ENCODE measurements at regions of chr4 and their contacts with region 1.

Region 1: GRCh38 chr4:117134386-117134785 is 49.0 kb upstream of the TRAM1L1 start:
- DNase-seq: peak; percentile 67
- ATAC-seq: peak; percentile 81
- H3K4me3 ChIP-seq: 0 out of 4 replicates have a peak overlapping the region, but pooled peaks of 1 of the 2 experiments have one; percentile 4
- H3K27ac ChIP-seq: no peak overlapping the region
- H3K4me1 ChIP-seq: peaks cover 0 to 25% of the 10 kb centered on the region in 2 experiments; a peak in 2 of 4 replicates
- H3K27me3 ChIP-seq: no peaks in the 10 kb centered on the region
- CTCF ChIP-seq: peak; percentile 60 to 76 (median 73)
- POLR2A ChIP-seq: no peak
- RAD21 ChIP-seq: peak; percentile 91

Region 2: DNA sequence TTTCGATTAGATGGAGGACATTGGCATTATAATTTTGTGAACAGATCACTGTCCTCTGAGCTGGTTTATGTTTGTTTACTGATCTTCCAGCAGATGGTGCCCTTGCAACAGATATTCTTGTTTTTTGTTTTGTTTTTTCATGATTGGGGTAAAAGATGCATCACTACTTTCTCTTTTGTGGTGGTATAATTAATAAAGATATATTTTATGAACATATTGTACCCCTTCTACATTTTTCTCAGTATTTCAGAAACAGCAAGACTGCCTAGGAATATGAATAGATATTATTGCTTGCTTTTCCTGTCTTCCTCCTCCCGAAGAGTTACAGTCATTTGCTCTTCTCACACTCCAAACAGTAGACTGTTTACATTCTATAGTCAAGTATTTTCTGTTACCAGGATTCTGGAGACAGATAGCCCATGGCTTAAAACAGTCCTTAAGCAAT is 954.2 kb before region 1 on chr4:
- CTCF ChIA-PET with region 1: no interaction called
- POLR2A ChIA-PET with region 1: no interaction called
- RAD21 ChIA-PET with region 1: no interaction called
- intact Hi-C with region 1: loop called (anchors 5 kb)
- DNase-seq: peak; percentile 10
- ATAC-seq: peak; percentile 59; the same call in 1 of the 2 replicates
- H3K4me3 ChIP-seq: no peak overlapping the region
- H3K27ac ChIP-seq: no peak overlapping the region
- H3K4me1 ChIP-seq: no peaks in the 10 kb centered on the region
- H3K27me3 ChIP-seq: no peaks in the 10 kb centered on the region
- CTCF ChIP-seq: peak; percentile 42 to 64 (median 46); a peak in 4 of 6 replicates
- POLR2A ChIP-seq: no peak
- RAD21 ChIP-seq: peak; percentile 76

Region 3: DNA sequence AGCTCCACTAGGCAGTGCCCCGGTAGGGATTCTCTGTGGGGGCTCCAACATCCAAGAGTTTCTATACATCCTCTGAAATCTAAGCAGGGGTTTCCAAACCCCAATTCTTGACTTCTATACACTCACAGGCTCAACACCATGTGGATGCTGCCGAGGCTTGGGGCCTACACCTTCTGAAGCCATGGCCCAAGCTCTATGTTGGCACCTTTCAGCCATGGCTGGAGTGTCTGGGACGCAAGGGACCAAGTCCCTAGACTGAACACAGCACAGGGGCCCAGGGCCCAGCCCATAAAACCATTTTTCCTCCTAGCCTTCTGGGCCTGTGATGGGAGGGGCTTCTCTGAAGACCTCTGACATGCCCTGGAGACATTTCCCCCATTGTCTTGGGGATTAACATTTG is 560.8 kb before region 1 on chr4:
- CTCF ChIA-PET with region 1: no interaction called
- POLR2A ChIA-PET with region 1: no interaction called
- RAD21 ChIA-PET with region 1: no interaction called
- intact Hi-C with region 1: no loop called
- DNase-seq: no peak
- ATAC-seq: no peak
- H3K4me3 ChIP-seq: no peak overlapping the region
- H3K27ac ChIP-seq: no peak overlapping the region
- H3K4me1 ChIP-seq: no peaks in the 10 kb centered on the region
- H3K27me3 ChIP-seq: no peaks in the 10 kb centered on the region
- CTCF ChIP-seq: no peak
- POLR2A ChIP-seq: no peak
- RAD21 ChIP-seq: no peak

Region 4: GRCh38 chr4:116934230-116934629 is 200.2 kb before region 1 on chr4:
- CTCF ChIA-PET with region 1: no interaction called
- POLR2A ChIA-PET with region 1: no interaction called
- RAD21 ChIA-PET with region 1: no interaction called
- intact Hi-C with region 1: no loop called
- DNase-seq: no peak
- ATAC-seq: no peak
- H3K4me3 ChIP-seq: no peak overlapping the region
- H3K27ac ChIP-seq: no peak overlapping the region
- H3K4me1 ChIP-seq: no peaks in the 10 kb centered on the region
- H3K27me3 ChIP-seq: no peaks in the 10 kb centered on the region
- CTCF ChIP-seq: no peak
- POLR2A ChIP-seq: no peak
- RAD21 ChIP-seq: no peak

Region 5: GRCh38 chr4:117560329-117560728 is 425.9 kb after region 1 on chr4:
- CTCF ChIA-PET with region 1: interaction called, 4 read pairs
- POLR2A ChIA-PET with region 1: no interaction called
- RAD21 ChIA-PET with region 1: no interaction called
- intact Hi-C with region 1: loop called (anchors 1 kb)
- DNase-seq: peak; percentile 7
- ATAC-seq: 0 out of 2 replicates have a peak, but pooled peaks have one; percentile 25
- H3K4me3 ChIP-seq: no peak overlapping the region
- H3K27ac ChIP-seq: no peak overlapping the region
- H3K4me1 ChIP-seq: no peaks in the 10 kb centered on the region
- H3K27me3 ChIP-seq: no peaks in the 10 kb centered on the region
- CTCF ChIP-seq: peak; percentile 5 to 40 (median 15); a peak in 4 of 6 replicates
- POLR2A ChIP-seq: no peak
- RAD21 ChIP-seq: peak; percentile 57

Region 6: DNA sequence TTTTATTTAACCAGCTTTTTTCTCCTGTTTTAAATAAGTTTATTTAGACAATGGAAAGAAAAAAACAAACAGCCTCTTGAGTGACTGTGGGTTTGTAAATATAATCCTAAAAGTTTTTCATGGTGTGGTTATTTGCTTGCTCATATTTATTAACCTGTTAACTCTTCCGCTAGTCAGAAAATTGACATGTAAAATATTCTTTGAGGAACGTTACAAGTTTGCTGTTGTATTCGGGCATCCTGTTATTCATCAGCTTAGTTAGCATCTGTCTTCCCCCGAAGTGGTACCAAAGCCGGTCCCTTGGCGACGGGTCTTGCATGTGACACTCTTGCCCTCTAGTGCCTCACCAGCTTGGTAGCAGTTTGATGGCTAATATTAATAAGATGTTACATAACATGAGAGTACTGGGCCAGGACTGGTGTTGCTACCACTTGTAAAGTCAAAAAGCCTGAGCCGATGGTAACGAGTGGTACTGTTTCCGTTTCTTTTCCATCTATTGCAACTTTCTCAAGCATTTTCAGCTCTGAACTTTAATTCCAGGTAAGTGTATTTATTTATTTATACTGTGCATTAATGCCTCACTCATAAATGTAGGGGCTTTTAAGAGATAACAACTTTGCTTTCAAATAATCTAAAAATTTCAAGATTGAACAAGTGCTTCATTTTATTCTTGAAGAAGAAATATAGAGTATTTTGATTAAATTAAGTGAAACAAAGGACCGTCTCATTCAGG is 899.8 kb after region 1 on chr4 and contains the start of gene NDST3:
- CTCF ChIA-PET with region 1: interaction called, 12 read pairs
- POLR2A ChIA-PET with region 1: no interaction called
- RAD21 ChIA-PET with region 1: interaction called in 1 of 2 experiments, 5 read pairs
- intact Hi-C with region 1: loop called (anchors 1 kb)
- DNase-seq: peak; percentile 71
- ATAC-seq: peak; percentile 70
- H3K4me3 ChIP-seq: peak within 1 kb of the TSS; percentile 55 to 65
- H3K27ac ChIP-seq: peak within 1 kb of the TSS; percentile 56; the same call in 1 of the 2 replicates
- H3K4me1 ChIP-seq: peaks cover 5 to 12% of the 10 kb centered on the region in 2 experiments
- H3K27me3 ChIP-seq: no peaks in the 10 kb centered on the region
- CTCF ChIP-seq: peak; percentile 57 to 73 (median 63); a peak in 5 of 6 replicates
- POLR2A ChIP-seq: no peak
- RAD21 ChIP-seq: peak; percentile 91
- total RNA-seq, gene NDST3: not detected

Region 7: GRCh38 chr4:118270492-118270891 is 1136.1 kb after region 1 on chr4:
- CTCF ChIA-PET with region 1: interaction called, 5 read pairs
- POLR2A ChIA-PET with region 1: no interaction called
- RAD21 ChIA-PET with region 1: no interaction called
- intact Hi-C with region 1: loop called (anchors 5 kb)
- DNase-seq: peak; percentile 35
- ATAC-seq: no peak
- H3K4me3 ChIP-seq: no peak overlapping the region
- H3K27ac ChIP-seq: no peak overlapping the region
- H3K4me1 ChIP-seq: no peaks in the 10 kb centered on the region
- H3K27me3 ChIP-seq: no peaks in the 10 kb centered on the region
- CTCF ChIP-seq: peak in 2 of 3 experiments; percentile 40 to 69; a peak in 3 of 6 replicates
- POLR2A ChIP-seq: no peak
- RAD21 ChIP-seq: peak; percentile 68

Measured in HCT116 (cell line).